ENCODE measurements at regions of chr9 and their contacts with region 1.

Region 1: GRCh38 chr9:4740638-4741364 is at the start of gene AK3:
- DNase-seq: peak; percentile 92 to 97 (median 95)
- ATAC-seq: peak; percentile 97
- H3K4me3 ChIP-seq: peak within 1 kb of the TSS; percentile 80
- H3K27ac ChIP-seq: peak within 1 kb of the TSS; percentile 62
- H3K4me1 ChIP-seq: peaks cover 9% of the 10 kb centered on the region
- H3K27me3 ChIP-seq: no peaks in the 10 kb centered on the region
- total RNA-seq, gene AK3: 111 to 153 (median 125) TPM

Region 2: GRCh38 chr9:4662108-4662988 is 78.5 kb before region 1 on chr9 and contains the start of gene PLPP6:
- intact Hi-C with region 1: loop called in 1 of 4 experiments (anchors 10 kb)
- DNase-seq: peak; percentile 90 to 95 (median 94)
- ATAC-seq: peak; percentile 95 to 96
- H3K4me3 ChIP-seq: peak within 1 kb of the TSS; percentile 82
- H3K27ac ChIP-seq: peak within 1 kb of the TSS; percentile 58
- H3K4me1 ChIP-seq: peaks cover 4% of the 10 kb centered on the region
- H3K27me3 ChIP-seq: no peaks in the 10 kb centered on the region
- total RNA-seq, gene PLPP6: 3.4 to 4.5 (median 3.8) TPM

Region 3: DNA sequence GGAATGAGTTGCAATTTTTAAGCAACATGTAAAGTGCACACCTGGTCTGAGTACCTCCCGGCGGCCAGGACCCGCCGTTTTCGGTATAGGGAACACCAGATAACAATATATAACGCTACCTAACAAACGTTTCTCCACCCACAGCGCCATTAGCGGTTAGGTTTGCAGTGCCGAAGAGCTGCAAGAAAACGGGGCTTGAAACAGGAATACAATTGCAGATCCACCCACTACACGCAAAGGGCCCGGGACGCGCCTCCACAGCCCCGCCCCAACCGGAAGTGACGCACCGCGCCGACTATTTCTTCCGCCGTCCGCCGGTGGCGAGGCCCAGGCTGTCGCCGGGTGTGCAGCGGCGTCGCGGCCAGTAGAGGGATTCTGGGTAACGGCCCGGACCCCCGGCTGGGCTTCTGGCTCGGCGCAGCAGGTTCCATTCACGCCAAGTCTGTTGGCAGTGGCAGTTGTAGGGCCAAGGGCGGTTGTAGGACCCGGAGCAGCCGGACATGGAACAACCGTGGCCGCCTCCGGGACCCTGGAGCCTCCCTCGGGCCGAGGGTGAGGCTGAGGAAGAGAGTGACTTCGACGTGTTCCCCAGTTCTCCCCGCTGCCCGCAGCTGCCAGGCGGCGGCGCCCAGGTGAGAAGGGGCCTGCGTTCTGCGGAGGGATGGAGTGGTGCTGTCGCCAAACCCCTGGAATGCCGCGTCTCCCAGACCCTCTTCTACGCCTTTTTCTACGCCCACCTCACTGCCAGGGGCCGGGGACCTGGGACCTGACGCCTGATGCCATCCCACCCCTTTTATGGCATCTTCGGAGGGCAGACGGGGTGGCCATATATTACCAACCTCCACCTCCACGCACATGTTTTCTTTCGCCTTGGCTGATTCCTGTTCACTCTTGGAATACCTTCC is 61.3 kb before region 1 on chr9 and contains the start of gene CDC37L1:
- intact Hi-C with region 1: loop called in 1 of 4 experiments (anchors 5 kb)
- DNase-seq: peak; percentile 98 to 100 (median 99)
- ATAC-seq: peak; percentile 99
- H3K4me3 ChIP-seq: peak within 1 kb of the TSS; percentile 88
- H3K27ac ChIP-seq: peak within 1 kb of the TSS; percentile 98
- H3K4me1 ChIP-seq: peaks cover 2% of the 10 kb centered on the region
- H3K27me3 ChIP-seq: no peaks in the 10 kb centered on the region
- total RNA-seq, gene CDC37L1: 40.2 to 48.4 (median 41.8) TPM

Region 4: GRCh38 chr9:4774209-4774608 is 33.4 kb after region 1 on chr9:
- intact Hi-C with region 1: no loop called
- DNase-seq: peak in 2 of 3 donors; percentile 30 to 56
- ATAC-seq: peak; percentile 80 to 84
- H3K4me3 ChIP-seq: no peak overlapping the region
- H3K27ac ChIP-seq: no peak overlapping the region
- H3K4me1 ChIP-seq: no peaks in the 10 kb centered on the region
- H3K27me3 ChIP-seq: no peaks in the 10 kb centered on the region

Measured in right cardiac atrium (tissue), 5 donors.